GM18951 (cell line): ENCODE measurements at regions of chr6 and their contacts with region 1.

Region 1: DNA sequence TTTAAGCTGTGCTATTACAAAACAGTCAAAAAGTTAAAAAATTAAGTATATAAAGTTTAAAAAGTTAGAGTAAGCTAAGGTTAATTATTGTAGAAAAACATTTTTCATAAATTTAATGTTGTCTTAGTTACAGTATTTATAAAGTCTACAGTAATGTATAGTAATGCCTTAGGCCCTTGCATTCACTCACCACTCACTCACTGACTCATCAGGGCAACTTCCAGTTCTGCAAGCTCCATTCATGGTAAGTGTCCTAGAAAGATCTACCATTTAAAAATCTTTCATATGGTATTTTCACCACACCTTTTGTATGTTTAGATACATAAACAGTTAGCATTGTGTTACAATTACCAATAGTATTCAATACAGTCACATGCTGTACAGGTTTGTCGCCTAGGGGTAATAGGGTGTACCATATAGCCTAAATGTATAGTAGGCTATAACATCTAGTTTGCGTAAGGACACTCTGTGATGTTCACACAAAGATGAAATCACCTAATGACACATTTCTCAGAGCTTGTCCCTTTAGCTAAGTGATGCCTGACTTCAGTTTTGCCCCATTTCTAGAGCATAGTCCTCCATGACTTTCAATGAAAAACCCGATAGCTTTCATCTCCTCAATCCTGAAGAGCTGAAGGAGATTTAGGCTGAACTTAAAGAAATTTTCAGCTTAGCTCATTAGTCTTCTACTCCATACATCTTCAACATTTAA is 14.9 kb upstream of the HLA-DRA start:
- POLR2A ChIP-seq: no peak

Region 2: DNA sequence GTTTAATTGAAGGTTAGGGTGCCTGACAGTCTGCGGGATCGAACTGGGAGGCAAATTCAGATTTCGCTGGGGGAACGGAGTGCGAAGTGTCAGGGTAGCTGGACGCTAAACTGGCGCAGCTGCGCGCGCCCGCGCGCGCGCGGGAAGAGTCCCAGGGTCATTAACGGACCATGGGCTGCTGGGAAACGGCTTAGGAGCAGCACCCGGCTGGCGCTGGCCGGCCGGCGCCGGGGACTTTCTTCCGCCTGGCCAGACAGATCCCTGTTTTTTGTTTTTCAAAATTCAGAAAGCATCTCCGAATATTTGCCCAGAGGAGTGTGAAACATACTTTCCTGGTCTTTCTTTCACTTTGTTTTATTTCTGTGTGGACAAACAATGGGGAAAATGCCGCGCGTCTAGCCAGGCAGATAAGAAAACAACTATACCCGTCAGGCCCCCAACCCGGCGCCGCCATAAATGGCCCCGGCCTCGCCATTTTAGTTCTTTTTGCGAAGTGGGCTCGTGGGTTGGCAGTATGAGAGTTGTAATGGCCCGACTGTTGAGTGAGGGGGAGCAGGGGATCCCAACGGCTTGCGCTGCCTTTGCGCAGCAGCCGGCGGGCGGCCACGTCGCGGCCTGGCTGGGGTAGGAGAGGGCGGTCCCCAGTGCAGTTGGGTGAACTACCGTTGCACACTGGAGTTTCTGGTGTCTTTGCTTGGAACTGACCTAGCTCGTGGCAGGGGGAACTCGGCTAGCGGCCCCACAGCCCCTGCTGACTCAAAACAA is 590.1 kb before region 1 on chr6:
- in situ Hi-C with region 1: no loop called
- POLR2A ChIP-seq: peak; percentile 99

Region 3: GRCh38 chr6:32642720-32643106 is 218.0 kb after region 1 on chr6:
- in situ Hi-C with region 1: no loop called
- POLR2A ChIP-seq: no peak

Region 4: DNA sequence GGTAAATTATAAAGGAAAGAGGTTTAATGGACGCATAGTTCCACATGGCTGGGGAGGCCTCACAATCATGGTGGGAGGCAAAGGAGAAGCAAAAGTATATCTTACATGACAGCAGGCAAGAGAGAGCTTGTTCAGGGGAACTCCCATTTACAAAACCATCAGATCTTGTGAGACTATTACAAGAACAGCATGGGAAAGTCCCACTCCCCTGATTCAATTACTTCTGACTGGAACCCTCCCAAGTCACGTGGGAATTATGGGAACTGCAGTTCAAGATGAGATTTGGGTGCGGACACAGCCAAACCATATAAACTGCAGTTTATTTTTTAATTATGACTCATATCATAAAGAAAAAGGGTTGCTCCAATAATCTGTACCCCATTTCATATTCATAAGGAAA is 294.1 kb after region 1 on chr6:
- in situ Hi-C with region 1: loop called (anchors 10 kb)
- POLR2A ChIP-seq: no peak

Region 5: DNA sequence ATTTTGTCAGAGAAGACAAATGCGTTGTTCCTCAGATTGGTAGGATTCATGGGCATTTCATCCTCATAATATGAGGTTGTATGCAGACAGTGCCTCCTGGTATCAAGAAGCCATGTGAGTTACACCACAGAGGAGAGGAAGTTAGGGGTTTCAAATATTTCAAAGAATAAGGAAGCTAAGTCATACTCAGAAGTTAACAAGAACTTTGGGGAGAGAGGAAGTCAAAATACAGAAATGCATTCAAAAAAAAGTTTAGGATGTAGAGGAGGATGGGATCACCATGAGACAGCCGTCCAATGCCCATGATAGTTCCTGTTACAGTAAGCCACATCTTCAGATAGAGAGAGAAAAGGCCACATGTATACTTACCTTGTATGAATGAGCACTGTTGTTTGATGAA is 369.8 kb after region 1 on chr6:
- in situ Hi-C with region 1: loop called (anchors 5 kb)
- POLR2A ChIP-seq: no peak